SK-N-SH (cell line): ENCODE measurements at regions of chr10 and their contacts with region 1.

Region 1: DNA sequence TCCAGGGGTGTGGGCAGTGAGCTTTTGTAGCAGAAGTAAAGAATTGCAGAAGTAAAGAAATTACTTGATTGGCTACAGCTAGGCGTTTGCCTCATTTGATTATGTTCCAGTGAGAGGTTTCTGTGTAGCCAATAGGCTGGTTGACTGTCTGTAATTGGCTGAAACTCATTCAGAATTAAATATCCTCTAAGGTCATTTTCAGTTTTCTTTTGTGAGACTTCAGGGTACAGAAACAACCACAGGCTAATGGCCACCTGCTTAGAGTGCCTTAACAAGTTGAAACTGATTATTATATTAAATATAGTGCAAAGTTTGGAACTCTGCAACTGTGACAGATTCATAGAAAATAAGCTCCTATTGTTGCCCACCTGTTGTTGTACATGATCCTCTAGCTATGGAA is 10.6 kb downstream of the SEC61A2 start:
- DNase-seq: no peak
- H3K4me3 ChIP-seq: no peak overlapping the region
- H3K27ac ChIP-seq: no peak overlapping the region
- H3K4me1 ChIP-seq: no peaks in the 10 kb centered on the region
- H3K27me3 ChIP-seq: no peaks in the 10 kb centered on the region
- CTCF ChIP-seq: no peak
- EP300 ChIP-seq: no peak
- RAD21 ChIP-seq: no peak

Region 2: GRCh38 chr10:12129222-12130111 is 10.6 kb before region 1 on chr10 and contains the start of gene SEC61A2:
- CTCF ChIA-PET with region 1: interaction called, 17 read pairs
- POLR2A ChIA-PET with region 1: no interaction called
- DNase-seq: peak; percentile 100
- H3K4me3 ChIP-seq: peak within 1 kb of the TSS; percentile 87 to 97
- H3K27ac ChIP-seq: peak within 1 kb of the TSS; percentile 84 to 85
- H3K4me1 ChIP-seq: no peaks in the 10 kb centered on the region; a peak in 1 of 4 replicates
- H3K27me3 ChIP-seq: no peaks in the 10 kb centered on the region
- CTCF ChIP-seq: no peak
- EP300 ChIP-seq: no peak
- RAD21 ChIP-seq: no peak
- polyA plus RNA-seq, gene SEC61A2: 11.9 and 18.9 TPM in 2 replicates